ENCODE measurements at regions of chr1 and their contacts with region 1.

Region 1: DNA sequence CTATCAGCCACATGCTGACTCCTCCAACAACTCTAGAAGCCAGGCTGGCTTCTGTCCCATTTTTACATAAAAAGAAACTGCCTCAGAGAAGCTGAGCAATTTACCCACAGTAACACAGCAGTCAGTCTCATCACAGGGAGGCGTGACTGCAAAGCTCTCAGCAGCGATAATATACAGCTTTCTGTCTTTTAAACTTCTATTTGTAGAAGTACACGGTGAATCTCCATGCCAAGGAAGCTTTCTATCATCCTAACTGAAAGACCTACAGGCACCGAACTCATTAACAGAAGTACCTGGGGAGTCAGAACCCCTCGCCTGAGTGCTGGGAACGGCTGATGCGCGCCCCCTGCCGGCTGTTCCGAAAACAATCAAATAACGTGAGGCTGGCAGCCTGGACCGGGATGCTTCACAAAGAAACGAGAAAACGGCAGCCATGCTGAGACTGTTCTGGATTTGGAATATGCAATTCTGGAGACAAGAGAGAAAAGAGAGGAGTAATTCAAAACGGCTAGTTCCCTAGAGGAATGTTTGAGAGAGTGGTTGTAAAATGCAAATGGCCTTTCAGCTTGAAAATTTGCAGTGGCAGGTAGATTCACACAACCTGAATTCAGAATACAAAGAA is 43.5 kb upstream of the RAB4A start:
- DNase-seq: peak; percentile 61
- ATAC-seq: peak; percentile 65
- H3K4me3 ChIP-seq: no peak overlapping the region
- H3K27ac ChIP-seq: no peak overlapping the region
- H3K4me1 ChIP-seq: peaks cover 5% of the 10 kb centered on the region; the same call in 1 of the 2 replicates
- H3K27me3 ChIP-seq: peaks cover 22% of the 10 kb centered on the region
- CTCF ChIP-seq: peak; percentile 87
- POLR2A ChIP-seq: no peak
- RAD21 ChIP-seq: peak; percentile 89

Region 2: DNA sequence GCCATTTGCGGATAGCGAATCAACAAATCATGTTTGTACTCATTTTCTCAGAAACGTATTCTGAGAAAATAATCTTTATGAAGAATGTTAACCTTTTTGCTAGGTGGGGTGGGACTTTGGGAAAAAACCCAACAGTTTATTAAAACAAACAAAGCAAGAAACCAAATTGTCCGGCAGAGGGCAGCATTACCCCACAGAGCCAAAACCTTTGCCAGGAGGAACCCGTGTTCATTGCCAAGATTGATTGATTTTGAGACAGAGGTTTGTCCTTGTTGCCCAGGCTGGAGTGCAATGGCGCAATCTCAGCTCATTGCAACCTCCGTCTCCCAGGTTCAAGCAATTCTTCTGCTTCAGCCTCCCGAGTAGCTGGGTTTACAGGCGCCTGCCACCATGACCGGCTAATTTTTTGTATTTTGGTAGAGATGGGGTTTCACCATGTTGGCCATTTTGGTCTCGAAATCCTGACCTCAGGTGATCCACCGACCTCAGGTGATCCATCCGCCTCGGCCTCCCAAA is 563.0 kb before region 1 on chr1:
- CTCF ChIA-PET with region 1: interaction called, 5 read pairs
- POLR2A ChIA-PET with region 1: no interaction called
- dilution Hi-C with region 1: no loop called
- in situ Hi-C with region 1: no loop called
- intact Hi-C with region 1: loop called (anchors 1 kb)
- DNase-seq: peak; percentile 50
- ATAC-seq: peak; percentile 66
- H3K4me3 ChIP-seq: no peak overlapping the region
- H3K27ac ChIP-seq: no peak overlapping the region
- H3K4me1 ChIP-seq: no peaks in the 10 kb centered on the region
- H3K27me3 ChIP-seq: peaks cover 7% of the 10 kb centered on the region; the same call in 1 of the 2 replicates
- CTCF ChIP-seq: peak; percentile 85
- POLR2A ChIP-seq: no peak
- RAD21 ChIP-seq: peak; percentile 89

Region 3: DNA sequence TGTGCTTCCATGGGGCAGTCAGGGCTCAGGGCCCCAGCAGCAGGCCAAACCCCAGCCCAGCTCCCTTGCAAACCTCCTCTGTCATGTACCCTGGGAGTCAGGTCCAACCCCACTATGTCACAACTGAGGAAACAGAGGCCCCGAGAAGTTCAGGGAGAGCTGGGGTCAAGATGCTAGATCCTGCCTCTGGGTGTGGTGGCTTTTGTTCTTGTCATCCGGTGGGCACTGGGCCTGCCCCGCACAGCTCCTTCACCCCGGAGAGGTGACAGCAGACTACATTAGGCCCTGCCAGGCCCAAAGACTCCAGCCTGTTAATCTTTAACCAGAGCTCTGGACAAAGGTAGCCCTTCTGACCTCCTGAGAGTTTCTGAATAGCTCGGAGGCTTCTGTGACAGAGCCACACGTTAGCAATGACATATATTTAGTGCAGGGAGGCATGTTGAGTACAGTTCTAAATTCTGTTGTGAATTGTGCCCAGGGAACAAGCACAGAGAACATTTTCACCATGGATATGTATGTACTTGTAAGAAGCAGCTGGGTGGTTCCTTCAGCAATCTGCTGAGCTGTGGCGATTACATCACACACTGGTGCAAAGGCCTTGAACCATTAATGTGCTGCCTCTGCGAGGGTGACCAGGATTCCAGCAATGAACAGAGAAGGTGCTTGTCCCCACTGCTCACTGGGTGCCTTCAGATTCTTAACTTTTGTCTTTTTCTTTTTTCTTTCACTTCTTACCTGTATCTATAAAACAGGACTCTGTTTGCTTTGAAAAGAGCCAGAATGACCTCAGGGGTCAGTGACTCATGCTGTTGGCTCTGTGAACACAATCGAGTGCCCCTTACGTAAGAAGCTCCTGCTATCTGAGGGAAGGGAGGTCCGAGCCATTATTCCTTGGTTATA is 389.3 kb before region 1 on chr1:
- CTCF ChIA-PET with region 1: no interaction called
- POLR2A ChIA-PET with region 1: no interaction called
- dilution Hi-C with region 1: no loop called
- in situ Hi-C with region 1: no loop called
- intact Hi-C with region 1: loop called (anchors 10 kb)
- DNase-seq: peak; percentile 93
- ATAC-seq: peak; percentile 67
- H3K4me3 ChIP-seq: no peak overlapping the region
- H3K27ac ChIP-seq: peak overlapping the region; percentile 36; the same call in 1 of the 2 replicates
- H3K4me1 ChIP-seq: peaks cover 18% of the 10 kb centered on the region
- H3K27me3 ChIP-seq: peaks cover 13% of the 10 kb centered on the region
- CTCF ChIP-seq: no peak
- POLR2A ChIP-seq: no peak
- RAD21 ChIP-seq: no peak

Region 4: DNA sequence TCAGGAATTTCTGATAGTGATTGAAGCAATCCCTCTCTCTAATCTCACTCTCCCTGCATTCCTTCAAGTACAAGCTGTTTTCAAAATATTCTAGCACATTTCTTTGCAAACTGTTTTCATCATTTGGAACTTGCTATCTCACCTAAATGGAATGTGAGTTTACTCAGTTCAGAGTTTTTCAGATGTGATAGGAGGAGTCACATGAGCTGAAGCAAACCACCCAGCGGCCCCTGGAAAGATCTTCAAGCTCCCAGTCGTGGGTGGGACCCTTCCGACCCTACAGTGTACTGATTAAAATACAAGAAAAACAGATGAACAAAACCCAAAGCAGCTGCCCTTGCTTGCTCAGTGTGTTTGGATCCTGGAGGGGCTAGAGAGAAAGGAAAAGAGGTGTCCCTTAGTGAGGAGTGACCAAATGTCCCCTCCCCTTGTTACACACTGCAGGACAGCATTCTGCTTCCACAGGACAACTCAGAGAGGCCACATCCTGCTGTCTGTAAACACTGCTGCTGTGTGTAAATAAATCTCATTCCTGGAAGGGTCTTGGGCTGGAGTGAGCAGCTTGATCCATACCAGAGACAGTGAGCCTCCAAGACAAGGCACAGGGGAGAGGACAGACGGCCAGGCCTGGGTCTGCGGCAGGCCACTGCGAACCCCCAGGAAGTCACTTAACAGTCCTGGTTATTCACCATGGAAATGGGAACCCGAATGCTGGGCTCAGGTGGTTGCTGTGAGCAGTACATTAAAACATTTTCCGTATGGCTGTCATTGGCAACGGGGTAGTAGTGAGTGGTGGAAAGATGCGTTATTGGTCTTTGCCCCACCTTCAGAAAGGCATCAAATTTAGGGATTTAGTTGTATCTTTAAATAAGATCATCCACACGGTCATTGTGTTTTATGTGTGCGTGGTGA is 263.0 kb before region 1 on chr1:
- CTCF ChIA-PET with region 1: interaction called, 3 read pairs
- POLR2A ChIA-PET with region 1: no interaction called
- dilution Hi-C with region 1: no loop called
- in situ Hi-C with region 1: no loop called
- intact Hi-C with region 1: loop called (anchors 5 kb)
- DNase-seq: peak; percentile 94
- ATAC-seq: peak; percentile 96
- H3K4me3 ChIP-seq: no peak overlapping the region
- H3K27ac ChIP-seq: peak overlapping the region; percentile 97
- H3K4me1 ChIP-seq: peaks cover 12% of the 10 kb centered on the region
- H3K27me3 ChIP-seq: no peaks in the 10 kb centered on the region
- CTCF ChIP-seq: no peak
- POLR2A ChIP-seq: no peak
- RAD21 ChIP-seq: 0 out of 2 replicates have a peak, but pooled peaks have one; percentile 1

Region 5: GRCh38 chr1:229156872-229157271 is 70.5 kb before region 1 on chr1:
- CTCF ChIA-PET with region 1: no interaction called
- POLR2A ChIA-PET with region 1: no interaction called
- dilution Hi-C with region 1: no loop called
- in situ Hi-C with region 1: no loop called
- intact Hi-C with region 1: loop called (anchors 2 kb)
- DNase-seq: no peak
- ATAC-seq: no peak
- H3K4me3 ChIP-seq: no peak overlapping the region
- H3K27ac ChIP-seq: no peak overlapping the region
- H3K4me1 ChIP-seq: no peaks in the 10 kb centered on the region
- H3K27me3 ChIP-seq: peaks cover 24% of the 10 kb centered on the region
- CTCF ChIP-seq: peak; percentile 31; the same call in 1 of the 2 replicates
- POLR2A ChIP-seq: no peak
- RAD21 ChIP-seq: peak; percentile 37; the same call in 1 of the 2 replicates

Measured in IMR-90 (cell line).